ENCODE measurements at regions of chr6 and their contacts with region 1.

Region 1: DNA sequence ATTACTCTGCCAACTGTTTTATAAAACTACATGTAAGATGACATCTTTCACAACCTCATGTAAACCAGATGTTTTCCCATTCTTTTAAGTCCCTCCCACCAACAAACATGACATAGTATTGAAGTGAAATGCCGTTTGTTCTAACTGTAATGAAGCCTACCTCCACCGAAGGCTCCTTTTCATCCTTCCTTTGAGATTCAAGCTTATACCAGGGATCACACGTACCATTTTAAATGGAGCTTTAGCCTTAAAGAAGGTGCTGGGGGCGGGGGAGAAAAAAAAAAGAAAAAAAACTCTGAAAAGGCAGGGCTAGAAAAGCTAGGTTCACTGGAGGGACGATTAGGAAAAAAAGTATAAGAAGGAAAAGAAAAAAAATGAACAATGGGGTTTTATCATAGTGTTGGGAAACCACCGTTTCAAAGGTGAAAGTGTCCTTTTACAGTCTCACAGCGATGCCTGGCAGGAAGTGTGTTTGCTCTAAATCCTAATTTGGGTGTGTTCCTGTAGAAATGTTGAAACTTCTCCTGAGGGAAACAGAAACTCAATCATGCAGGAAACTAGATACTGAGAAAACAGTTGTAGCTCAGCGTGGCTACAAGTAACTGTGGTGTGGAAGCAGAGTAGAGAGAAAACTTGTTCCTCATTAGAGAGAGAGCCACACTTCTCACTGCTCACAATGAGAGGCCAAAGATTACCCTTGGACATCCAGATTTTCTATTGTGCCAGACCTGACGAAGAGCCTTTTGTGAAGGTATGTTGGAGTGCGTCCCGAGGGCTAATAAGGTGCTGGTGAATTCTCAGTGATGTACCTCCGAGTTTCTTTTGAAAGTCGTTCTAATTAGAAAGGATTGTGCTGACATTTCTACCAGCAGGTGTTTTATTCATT is 37.6 kb upstream of the HINT3 start:
- DNase-seq: peak; percentile 70
- H3K4me3 Mint-ChIP-seq: peak overlapping the region; percentile 84
- H3K27ac Mint-ChIP-seq: peak overlapping the region; percentile 95
- H3K4me1 Mint-ChIP-seq: peaks cover 56% of the 10 kb centered on the region
- H3K27me3 Mint-ChIP-seq: no peaks in the 10 kb centered on the region

Region 2: GRCh38 chr6:125790358-125791150 is 128.4 kb before region 1 on chr6 and contains the start of gene NCOA7:
- CTCF ChIA-PET with region 1: interaction called, 8 read pairs
- POLR2A ChIA-PET with region 1: interaction called, 13 read pairs
- DNase-seq: peak; percentile 82
- H3K4me3 Mint-ChIP-seq: peak within 1 kb of the TSS; percentile 90
- H3K27ac Mint-ChIP-seq: peak within 1 kb of the TSS; percentile 100
- H3K4me1 Mint-ChIP-seq: peaks cover 51% of the 10 kb centered on the region
- H3K27me3 Mint-ChIP-seq: no peaks in the 10 kb centered on the region
- total RNA-seq, gene NCOA7: 43.2 to 53.1 TPM

Region 3: DNA sequence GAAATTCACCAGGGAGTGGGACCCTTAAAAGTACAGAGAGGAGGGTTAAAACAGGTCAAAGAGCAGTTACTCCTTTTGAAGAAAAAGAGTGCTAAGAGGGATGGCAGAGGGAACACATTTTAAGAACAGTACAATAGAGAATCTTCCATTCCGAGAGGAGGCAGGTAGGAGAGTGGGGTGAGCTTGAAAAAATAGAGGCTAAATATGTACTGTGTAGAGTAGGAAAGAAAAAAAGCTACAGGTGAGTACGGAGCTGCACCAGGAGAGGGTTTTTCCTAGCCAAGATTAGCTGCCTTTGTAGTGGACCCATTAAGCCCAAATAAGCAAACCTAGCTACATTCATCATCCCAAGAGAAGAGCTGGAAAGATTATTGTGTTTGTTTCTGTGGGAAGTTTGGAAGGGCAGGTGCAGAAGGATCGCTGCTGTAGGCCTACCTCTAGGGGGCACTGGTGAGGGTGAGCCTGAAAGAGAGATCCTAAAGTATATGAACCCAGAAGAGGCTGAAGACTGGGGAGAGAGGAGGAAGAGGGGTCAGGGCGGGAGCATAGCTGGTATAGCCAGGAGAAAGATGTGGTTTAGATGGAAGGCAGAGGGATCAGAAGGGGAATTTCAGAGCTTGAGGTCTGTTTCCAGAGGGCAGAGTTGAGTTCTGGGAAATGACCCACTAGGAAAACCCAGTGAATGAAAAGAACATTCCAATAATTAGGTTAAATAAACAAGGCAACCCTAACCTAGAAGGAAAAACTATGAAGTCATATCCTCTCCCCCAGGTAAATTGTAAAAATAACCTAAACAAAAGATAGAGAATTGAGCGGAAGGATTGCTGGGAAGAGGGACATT is 12.5 kb before region 1 on chr6:
- CTCF ChIA-PET with region 1: interaction called, 19 read pairs
- POLR2A ChIA-PET with region 1: interaction called, 4 read pairs
- DNase-seq: peak; percentile 55
- H3K4me3 Mint-ChIP-seq: no peak overlapping the region
- H3K27ac Mint-ChIP-seq: no peak overlapping the region
- H3K4me1 Mint-ChIP-seq: peaks cover 31% of the 10 kb centered on the region
- H3K27me3 Mint-ChIP-seq: no peaks in the 10 kb centered on the region

Region 4: DNA sequence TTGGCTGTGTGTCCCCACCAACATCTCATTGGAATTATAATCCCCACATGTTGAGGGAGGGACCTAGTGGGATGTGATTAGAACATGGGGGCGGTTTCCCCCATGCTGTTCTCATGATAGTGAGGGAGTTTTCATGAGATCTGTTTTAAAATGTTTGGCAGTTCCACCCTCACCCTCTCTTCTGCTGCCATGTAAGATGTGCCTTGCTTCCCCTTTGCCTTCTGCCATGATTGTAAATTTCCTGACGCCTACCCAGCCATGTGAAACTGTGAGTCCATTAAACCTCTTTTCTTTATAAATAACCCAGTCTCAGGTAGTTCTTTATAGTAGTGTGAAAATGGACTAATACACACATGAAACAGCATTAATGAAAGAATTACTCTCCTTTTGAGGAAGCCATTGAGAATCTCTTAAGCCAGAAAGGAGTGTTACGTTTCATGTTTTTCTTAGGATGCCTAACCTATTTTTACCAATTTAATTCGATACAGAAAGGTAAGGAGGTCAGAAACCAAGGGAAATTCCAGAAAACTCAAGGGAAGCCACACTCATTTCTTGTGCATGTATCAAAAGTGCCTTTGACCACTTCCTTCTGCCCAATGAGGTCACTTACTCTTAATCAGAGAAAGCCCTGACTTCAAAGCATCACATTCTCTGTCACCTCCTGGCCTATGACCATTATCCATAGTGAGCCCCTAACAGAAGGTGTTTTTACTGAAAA is 13.0 kb after region 1 on chr6:
- CTCF ChIA-PET with region 1: interaction called, 13 read pairs
- POLR2A ChIA-PET with region 1: no interaction called
- DNase-seq: no peak
- H3K4me3 Mint-ChIP-seq: no peak overlapping the region
- H3K27ac Mint-ChIP-seq: no peak overlapping the region
- H3K4me1 Mint-ChIP-seq: peaks cover 9% of the 10 kb centered on the region
- H3K27me3 Mint-ChIP-seq: peaks cover 2% of the 10 kb centered on the region